ENCODE measurements at regions of chr2 and their contacts with region 1.

Region 1: DNA sequence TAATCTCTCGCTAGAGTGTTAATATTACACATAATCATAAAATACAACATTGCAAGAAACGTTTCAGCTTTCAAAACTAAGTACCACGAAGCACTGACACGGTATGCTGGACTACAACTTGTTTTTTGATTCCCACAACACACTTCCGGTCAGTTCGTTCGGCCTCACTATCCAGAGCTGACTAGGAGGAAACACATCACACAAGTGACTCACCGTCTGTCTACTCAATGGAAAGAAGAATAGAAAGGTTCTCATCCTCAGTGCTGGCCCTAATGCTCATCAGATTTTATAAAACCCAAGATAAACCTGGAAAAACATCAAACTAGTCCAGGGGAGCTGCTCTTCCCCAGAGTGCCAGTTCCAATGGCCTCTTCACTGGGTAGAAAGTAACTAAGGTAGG is 42.9 kb downstream of the ZNF385B start:
- DNase-seq: no peak
- ATAC-seq: no peak

Region 2: DNA sequence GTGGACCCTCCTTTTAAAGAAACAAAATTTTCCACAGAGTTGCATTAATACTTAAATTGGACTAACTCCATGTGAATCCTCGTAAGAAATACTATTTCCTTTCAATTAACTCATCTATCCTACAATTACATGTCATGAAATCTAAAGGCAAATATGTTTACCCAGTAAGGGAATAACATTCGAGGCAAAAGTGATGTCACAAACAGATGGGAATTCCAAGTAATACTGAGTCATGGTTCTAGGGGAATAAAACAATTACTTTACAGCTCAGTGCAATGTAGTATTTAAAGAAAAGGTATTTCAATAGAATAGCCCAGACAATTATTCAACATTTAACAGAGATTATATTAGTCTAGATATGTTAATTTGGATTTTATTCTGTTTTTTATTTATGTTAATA is 162.9 kb before region 1 on chr2:
- intact Hi-C with region 1: no loop called
- DNase-seq: no peak
- ATAC-seq: no peak

Region 3: GRCh38 chr2:179711375-179711774 is 107.2 kb before region 1 on chr2:
- intact Hi-C with region 1: loop called in 1 of 2 experiments (anchors 5 kb)
- DNase-seq: no peak
- ATAC-seq: no peak